A549 (cell line): ENCODE measurements at regions of chr19 and their contacts with region 1.

Region 1: DNA sequence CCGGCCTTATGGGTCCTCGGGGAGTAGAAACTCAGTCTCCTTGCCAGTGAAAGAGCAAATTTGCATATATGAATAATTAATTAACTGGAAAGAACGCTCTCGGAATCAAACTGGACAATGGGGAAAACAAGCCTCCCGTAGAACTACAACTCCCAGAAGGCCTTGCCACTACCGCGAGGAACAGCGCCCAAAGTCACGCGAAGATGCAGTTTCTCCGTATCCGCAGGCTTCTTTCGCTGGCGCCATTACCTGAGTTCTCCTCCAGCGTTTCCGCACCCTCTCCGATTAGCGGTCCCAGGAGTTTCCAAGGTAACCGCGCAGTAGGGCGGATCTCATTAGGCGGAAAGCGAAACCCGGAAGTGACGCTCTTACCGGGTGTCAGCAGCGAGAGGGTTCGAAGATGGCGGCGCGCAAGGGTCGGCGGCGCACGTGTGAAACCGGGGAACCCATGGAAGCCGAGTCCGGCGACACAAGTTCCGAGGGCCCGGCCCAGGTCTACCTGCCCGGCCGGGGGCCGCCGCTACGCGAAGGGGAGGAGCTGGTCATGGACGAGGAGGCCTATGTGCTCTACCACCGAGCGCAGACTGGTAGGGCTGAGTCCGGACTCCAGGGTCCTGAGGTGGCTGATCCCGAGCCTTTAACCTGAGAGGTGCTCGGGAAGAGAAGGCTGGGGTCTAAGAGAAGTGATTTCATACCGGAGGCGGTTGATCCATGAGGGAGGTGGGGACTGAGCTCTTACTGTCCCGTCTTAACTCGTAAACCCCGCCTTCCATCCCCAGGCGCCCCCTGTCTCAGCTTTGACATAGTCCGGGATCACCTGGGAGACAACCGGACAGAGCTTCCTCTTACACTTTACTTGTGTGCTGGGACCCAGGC is at the start of gene GRWD1:
- DNase-seq: peak; percentile 99 to 100
- ATAC-seq: peak; percentile 91 to 92
- H3K4me3 ChIP-seq: peak within 1 kb of the TSS; percentile 81
- H3K27ac ChIP-seq: peak within 1 kb of the TSS; percentile 90 to 91
- H3K4me1 ChIP-seq: peaks cover 23% of the 10 kb centered on the region
- CTCF ChIP-seq: peak; percentile 24
- EP300 ChIP-seq: no peak
- POLR2A ChIP-seq: peak; percentile 91
- RAD21 ChIP-seq: no peak
- polyA plus RNA-seq, gene GRWD1: 40.0 and 48.1 TPM in 2 replicates

Region 2: GRCh38 chr19:48351341-48351752 is 94.5 kb before region 1 on chr19:
- CTCF ChIA-PET with region 1: interaction called, 10 read pairs
- POLR2A ChIA-PET with region 1: no interaction called
- DNase-seq: peak; percentile 82 to 89
- ATAC-seq: peak; percentile 76 to 83
- H3K4me3 ChIP-seq: no peak overlapping the region
- H3K27ac ChIP-seq: peak overlapping the region in 1 of 2 experiments; percentile 74; a peak in 3 of 6 replicates
- H3K4me1 ChIP-seq: peaks cover 29% of the 10 kb centered on the region
- CTCF ChIP-seq: peak; percentile 90
- EP300 ChIP-seq: no peak
- POLR2A ChIP-seq: no peak
- RAD21 ChIP-seq: peak; percentile 73

Region 3: GRCh38 chr19:48391107-48391986 is 54.5 kb before region 1 on chr19 and contains the start of gene KDELR1:
- CTCF ChIA-PET with region 1: interaction called, 15 read pairs
- POLR2A ChIA-PET with region 1: interaction called, 5 read pairs
- DNase-seq: peak; percentile 77 to 78
- ATAC-seq: peak; percentile 54 to 72
- H3K4me3 ChIP-seq: peak within 1 kb of the TSS; percentile 97
- H3K27ac ChIP-seq: peak within 1 kb of the TSS; percentile 95 to 97
- H3K4me1 ChIP-seq: peaks cover 54% of the 10 kb centered on the region
- CTCF ChIP-seq: peak; percentile 90
- EP300 ChIP-seq: no peak
- POLR2A ChIP-seq: peak; percentile 72
- RAD21 ChIP-seq: peak; percentile 31 to 47; a peak in 4 of 5 replicates
- polyA plus RNA-seq, gene KDELR1: 200 and 270 TPM in 2 replicates

Region 4: DNA sequence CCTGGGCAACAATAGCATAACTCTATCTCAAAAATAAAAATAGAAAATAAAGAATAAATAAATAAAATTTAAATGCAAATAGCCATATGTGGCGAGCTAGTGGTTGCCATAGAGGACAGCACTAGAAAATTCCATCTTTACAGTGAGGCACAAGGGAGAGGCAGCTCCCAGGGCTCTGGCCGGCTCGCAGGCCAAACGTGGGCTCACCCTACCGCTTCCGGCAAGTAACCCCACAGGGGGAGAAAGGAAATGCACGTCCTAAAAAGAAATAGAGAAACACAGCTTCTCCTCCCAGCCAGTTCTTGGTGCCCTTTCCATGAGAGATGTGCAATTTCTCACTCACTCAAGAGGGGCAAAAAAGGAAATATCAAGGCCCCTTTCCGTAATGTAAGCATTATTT is 12.5 kb before region 1 on chr19:
- CTCF ChIA-PET with region 1: interaction called, 30 read pairs
- POLR2A ChIA-PET with region 1: no interaction called
- DNase-seq: no peak
- ATAC-seq: peak in 1 of 2 experiments; percentile 41; a peak in 3 of 6 replicates
- H3K4me3 ChIP-seq: no peak overlapping the region
- H3K27ac ChIP-seq: no peak overlapping the region
- H3K4me1 ChIP-seq: no peaks in the 10 kb centered on the region
- CTCF ChIP-seq: no peak
- EP300 ChIP-seq: no peak
- POLR2A ChIP-seq: no peak
- RAD21 ChIP-seq: no peak

Region 5: GRCh38 chr19:48469289-48469881 is 23.5 kb after region 1 on chr19 and contains the start of gene CYTH2:
- CTCF ChIA-PET with region 1: interaction called, 23 read pairs
- POLR2A ChIA-PET with region 1: interaction called, 4 read pairs
- DNase-seq: peak; percentile 70 to 84
- ATAC-seq: peak; percentile 62 to 82
- H3K4me3 ChIP-seq: peak within 1 kb of the TSS; percentile 82
- H3K27ac ChIP-seq: peak within 1 kb of the TSS; percentile 94 to 96
- H3K4me1 ChIP-seq: peaks cover 24% of the 10 kb centered on the region
- CTCF ChIP-seq: no peak
- EP300 ChIP-seq: no peak
- POLR2A ChIP-seq: peak; percentile 81
- RAD21 ChIP-seq: no peak; a peak in 2 of 5 replicates
- polyA plus RNA-seq, gene CYTH2: 33.4 and 36.9 TPM in 2 replicates

Region 6: GRCh38 chr19:48492925-48493717 is 47.3 kb after region 1 on chr19:
- CTCF ChIA-PET with region 1: interaction called, 13 read pairs
- POLR2A ChIA-PET with region 1: interaction called, 5 read pairs
- DNase-seq: peak; percentile 95 to 100
- ATAC-seq: peak; percentile 67 to 85
- H3K4me3 ChIP-seq: peak overlapping the region; percentile 65
- H3K27ac ChIP-seq: peak overlapping the region; percentile 86 to 94
- H3K4me1 ChIP-seq: peaks cover 50% of the 10 kb centered on the region
- CTCF ChIP-seq: no peak
- EP300 ChIP-seq: no peak
- POLR2A ChIP-seq: peak; percentile 89
- RAD21 ChIP-seq: no peak

Region 7: GRCh38 chr19:48713864-48714758 is 268.3 kb after region 1 on chr19:
- CTCF ChIA-PET with region 1: no interaction called
- POLR2A ChIA-PET with region 1: no interaction called
- DNase-seq: peak; percentile 100
- ATAC-seq: peak; percentile 92
- H3K4me3 ChIP-seq: peak overlapping the region; percentile 68
- H3K27ac ChIP-seq: peak overlapping the region; percentile 86 to 90
- H3K4me1 ChIP-seq: peaks cover 16% of the 10 kb centered on the region
- CTCF ChIP-seq: no peak
- EP300 ChIP-seq: no peak
- POLR2A ChIP-seq: peak; percentile 83
- RAD21 ChIP-seq: no peak